ENCODE measurements at regions of chr2 and their contacts with region 1.

Region 1: DNA sequence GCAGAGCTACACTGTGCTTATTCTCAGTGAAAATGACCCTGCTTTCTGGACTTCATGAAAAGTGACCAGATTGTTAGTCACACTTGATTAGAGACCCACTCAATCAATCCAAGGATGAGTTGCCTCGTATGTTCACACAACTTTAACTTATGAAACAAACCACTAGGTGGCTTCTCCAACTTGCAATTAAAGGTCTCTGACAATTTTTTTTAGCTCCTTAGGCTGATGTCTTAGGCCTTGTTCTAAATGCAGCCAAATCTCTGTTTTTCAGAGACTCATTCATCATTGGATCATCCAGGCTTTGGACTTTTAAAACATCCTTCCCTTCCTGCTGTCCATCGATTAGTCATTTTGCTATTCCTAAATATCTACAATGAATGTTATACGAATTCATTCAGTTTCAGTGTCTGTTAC is 63.4 kb downstream of the MREG start:
- DNase-seq: peak; percentile 50
- CTCF ChIP-seq: peak; percentile 58

Region 2: DNA sequence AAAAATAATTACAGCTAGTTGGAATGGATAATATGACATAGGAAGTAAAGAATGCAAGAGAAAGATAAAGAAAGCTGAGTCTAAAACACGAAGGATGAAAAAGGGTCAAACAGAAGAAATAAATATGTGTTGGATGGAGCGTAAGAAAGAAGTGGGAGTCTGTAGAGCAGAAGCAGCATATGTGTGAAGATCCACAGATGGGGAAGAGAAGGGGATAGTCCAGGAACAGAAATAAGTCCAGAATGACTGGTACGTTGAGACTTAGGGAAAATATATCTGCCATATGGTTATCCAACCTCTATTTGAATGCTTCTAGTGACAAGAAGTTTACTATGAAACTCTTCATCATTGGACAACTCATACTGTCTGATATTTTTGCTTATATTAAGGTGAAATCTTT is 829.6 kb before region 1 on chr2:
- in situ Hi-C with region 1: no loop called
- DNase-seq: no peak
- CTCF ChIP-seq: no peak

Region 3: DNA sequence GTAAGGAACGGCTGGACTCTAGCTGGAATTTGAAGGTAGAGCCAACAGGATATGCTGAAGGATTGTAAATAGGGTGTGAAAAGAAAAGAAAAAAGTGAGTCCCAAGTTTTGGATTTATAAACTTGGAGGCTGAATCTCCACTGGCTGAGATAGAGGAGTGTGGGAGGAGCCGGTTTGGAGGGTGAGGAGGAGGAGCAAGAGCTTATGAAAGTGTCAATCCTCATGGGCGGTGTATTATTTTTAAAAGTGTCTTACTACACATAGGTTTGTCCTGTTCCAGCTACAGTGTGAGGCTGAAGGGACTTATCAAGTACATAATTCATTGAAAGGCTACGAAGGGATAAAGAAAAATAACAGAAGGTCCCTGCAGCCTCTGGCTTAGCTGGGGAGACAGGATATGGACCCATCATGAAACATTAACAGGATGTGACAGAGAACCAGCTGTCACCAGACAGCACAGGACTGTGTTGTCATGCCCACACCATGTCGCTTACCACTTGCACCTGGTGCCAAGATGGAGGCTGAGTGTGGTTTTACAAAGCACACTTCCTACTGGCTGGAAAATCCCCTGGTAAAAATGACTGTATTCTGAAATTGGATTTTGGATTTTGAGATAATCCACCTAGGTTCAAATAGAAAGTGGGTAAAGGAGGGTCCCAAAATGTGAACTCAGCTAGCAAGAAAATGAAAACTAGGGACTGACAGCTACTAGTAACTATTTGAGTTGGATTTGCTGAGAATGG is 65.9 kb after region 1 on chr2:
- in situ Hi-C with region 1: loop called (anchors 5 kb)
- DNase-seq: peak; percentile 76
- CTCF ChIP-seq: no peak

Region 4: DNA sequence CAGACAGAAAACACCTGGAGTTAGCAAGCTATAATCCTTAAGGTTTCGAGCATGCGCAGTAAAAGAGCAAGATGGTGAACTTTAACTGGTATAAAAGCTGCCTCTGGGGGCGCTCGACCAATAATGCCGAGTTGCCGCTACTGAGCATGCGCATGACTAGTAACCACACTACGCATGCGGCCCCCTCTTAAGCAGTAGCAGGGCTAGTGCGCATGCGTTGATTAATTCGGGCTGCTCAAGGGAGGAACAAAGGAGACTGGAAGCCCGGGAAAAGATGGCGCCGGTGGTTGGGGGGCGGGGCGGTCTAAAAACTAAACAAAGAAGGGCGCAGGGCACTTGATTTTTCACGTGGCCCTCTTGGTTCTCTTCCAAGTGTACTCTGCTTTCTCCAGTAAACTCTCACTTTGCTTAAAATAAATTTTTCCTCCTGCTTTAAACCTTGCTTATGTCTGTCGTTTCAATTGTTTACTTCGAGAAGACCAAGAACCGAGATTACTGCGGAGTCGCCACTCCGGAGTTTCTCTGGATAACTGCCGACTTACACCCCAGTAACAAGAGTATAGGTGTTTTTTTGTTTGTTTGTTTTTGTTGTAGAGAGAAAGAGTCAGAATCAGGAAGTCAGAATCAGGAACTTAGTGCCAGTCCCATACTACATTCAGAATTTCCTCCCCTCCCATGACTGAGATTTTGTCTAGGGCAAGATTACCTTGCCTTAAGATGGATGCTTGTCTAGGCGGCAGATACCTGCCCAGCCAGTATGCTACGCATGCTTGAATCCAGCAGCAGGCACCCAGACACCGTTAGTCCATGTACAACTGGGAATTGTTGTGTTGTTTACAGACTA is 164.9 kb after region 1 on chr2:
- in situ Hi-C with region 1: no loop called
- DNase-seq: peak; percentile 83
- CTCF ChIP-seq: peak; percentile 81

Measured in GM13977 (cell line).